ENCODE measurements at regions of chr20 and their contacts with region 1.

Region 1: GRCh38 chr20:50516180-50516934 is 6.2 kb downstream of the PTPN1 start:
- DNase-seq: peak; percentile 87
- ATAC-seq: peak; percentile 59
- H3K4me3 ChIP-seq: peak overlapping the region; percentile 100
- H3K27ac ChIP-seq: peak overlapping the region; percentile 98
- H3K4me1 ChIP-seq: peaks cover 46% of the 10 kb centered on the region
- H3K27me3 ChIP-seq: no peaks in the 10 kb centered on the region
- CTCF ChIP-seq: no peak
- EP300 ChIP-seq: peak; percentile 95 to 98
- POLR2A ChIP-seq: no peak
- RAD21 ChIP-seq: no peak

Region 2: DNA sequence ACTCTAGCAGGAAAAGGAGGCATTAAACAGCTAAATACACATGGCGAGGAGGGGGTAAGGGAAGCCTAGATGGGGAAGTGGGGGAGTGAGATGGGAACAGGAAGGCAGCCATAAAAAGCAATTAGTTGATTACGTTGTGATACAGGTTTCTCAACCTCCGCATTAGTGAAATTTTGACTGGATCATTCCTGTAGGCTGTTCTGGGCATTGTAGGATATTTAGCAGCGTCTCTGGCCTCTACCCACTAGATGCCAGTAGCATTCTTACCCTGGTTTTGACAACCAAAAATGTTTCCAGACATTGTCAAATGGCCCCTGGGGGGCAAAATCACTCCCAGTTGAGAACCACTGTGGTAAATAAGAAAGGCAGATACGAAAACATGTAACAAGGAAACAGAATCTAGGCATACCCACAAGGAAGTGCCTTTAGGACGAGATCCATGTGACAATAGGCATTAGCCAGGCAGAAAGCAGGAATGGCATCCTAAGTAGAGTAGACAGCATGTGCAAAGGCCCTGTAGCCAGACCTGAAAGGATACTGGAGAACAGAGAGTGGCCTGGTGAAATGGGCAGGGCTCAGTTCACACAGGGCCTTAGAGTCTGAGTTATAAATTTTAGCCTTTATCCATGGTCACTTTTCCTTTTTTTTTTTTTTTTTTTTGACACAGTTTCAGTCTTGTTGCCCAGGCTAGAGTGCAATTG is 31.9 kb before region 1 on chr20:
- CTCF ChIA-PET with region 1: interaction called, 13 read pairs
- POLR2A ChIA-PET with region 1: interaction called, 29 read pairs
- RAD21 ChIA-PET with region 1: interaction called, 23 read pairs
- SMC1A ChIA-PET with region 1: interaction called, 2,799 read pairs
- in situ Hi-C with region 1: no loop called
- intact Hi-C with region 1: loop called (anchors 2 kb)
- DNase-seq: no peak
- ATAC-seq: no peak
- H3K4me3 ChIP-seq: no peak overlapping the region
- H3K27ac ChIP-seq: peak overlapping the region; percentile 54
- H3K4me1 ChIP-seq: peaks cover 30% of the 10 kb centered on the region
- H3K27me3 ChIP-seq: no peaks in the 10 kb centered on the region
- CTCF ChIP-seq: no peak
- EP300 ChIP-seq: no peak
- POLR2A ChIP-seq: no peak
- RAD21 ChIP-seq: peak; percentile 36; the same call in 1 of the 2 replicates

Region 3: GRCh38 chr20:50528804-50529351 is 12.5 kb after region 1 on chr20:
- CTCF ChIA-PET with region 1: interaction called, 8 read pairs
- POLR2A ChIA-PET with region 1: interaction called, 56 read pairs
- RAD21 ChIA-PET with region 1: interaction called, 40 read pairs
- SMC1A ChIA-PET with region 1: interaction called, 2,799 read pairs
- in situ Hi-C with region 1: no loop called
- intact Hi-C with region 1: no loop called
- DNase-seq: no peak
- ATAC-seq: peak; percentile 85
- H3K4me3 ChIP-seq: peak overlapping the region; percentile 59
- H3K27ac ChIP-seq: peak overlapping the region; percentile 78
- H3K4me1 ChIP-seq: peaks cover 42% of the 10 kb centered on the region
- H3K27me3 ChIP-seq: no peaks in the 10 kb centered on the region
- CTCF ChIP-seq: no peak
- EP300 ChIP-seq: no peak
- POLR2A ChIP-seq: no peak
- RAD21 ChIP-seq: no peak

Region 4: DNA sequence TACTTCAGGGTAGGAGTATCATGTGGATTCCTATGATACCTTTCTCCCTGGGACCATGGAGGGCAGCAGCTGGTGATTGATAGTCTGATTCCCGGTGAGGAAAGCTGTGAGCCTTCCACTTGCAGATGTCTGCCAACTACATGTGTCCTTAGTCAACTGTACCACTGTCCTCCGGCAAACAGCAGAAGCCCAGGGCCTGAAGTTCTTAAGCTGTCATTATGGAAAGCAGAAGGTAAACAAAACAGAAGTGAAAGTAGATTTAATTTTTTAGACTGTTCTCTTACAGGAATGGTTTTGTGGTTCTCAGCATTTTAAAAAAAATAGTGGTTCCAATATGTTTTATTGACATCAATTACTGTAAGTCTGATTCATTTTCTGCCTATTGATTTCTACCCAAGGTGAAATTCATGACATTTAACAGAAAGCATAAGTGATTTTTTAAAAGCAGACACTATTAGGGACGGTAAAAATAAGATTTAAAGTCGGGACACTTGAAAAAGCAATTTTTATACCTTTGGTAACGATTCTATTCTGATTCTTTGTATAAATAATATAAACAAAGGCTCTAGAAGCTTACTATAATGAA is 30.5 kb after region 1 on chr20:
- CTCF ChIA-PET with region 1: interaction called, 14 read pairs
- POLR2A ChIA-PET with region 1: interaction called, 44 read pairs
- RAD21 ChIA-PET with region 1: interaction called, 167 read pairs
- SMC1A ChIA-PET with region 1: interaction called, 2,799 read pairs
- in situ Hi-C with region 1: no loop called
- intact Hi-C with region 1: no loop called
- DNase-seq: no peak
- ATAC-seq: peak; percentile 77
- H3K4me3 ChIP-seq: peak overlapping the region; percentile 58
- H3K27ac ChIP-seq: peak overlapping the region; percentile 17
- H3K4me1 ChIP-seq: peaks cover 66% of the 10 kb centered on the region
- H3K27me3 ChIP-seq: no peaks in the 10 kb centered on the region
- CTCF ChIP-seq: no peak
- EP300 ChIP-seq: peak in 1 of 2 experiments; percentile 23; a peak in 1 of 4 replicates
- POLR2A ChIP-seq: no peak
- RAD21 ChIP-seq: no peak

Region 5: DNA sequence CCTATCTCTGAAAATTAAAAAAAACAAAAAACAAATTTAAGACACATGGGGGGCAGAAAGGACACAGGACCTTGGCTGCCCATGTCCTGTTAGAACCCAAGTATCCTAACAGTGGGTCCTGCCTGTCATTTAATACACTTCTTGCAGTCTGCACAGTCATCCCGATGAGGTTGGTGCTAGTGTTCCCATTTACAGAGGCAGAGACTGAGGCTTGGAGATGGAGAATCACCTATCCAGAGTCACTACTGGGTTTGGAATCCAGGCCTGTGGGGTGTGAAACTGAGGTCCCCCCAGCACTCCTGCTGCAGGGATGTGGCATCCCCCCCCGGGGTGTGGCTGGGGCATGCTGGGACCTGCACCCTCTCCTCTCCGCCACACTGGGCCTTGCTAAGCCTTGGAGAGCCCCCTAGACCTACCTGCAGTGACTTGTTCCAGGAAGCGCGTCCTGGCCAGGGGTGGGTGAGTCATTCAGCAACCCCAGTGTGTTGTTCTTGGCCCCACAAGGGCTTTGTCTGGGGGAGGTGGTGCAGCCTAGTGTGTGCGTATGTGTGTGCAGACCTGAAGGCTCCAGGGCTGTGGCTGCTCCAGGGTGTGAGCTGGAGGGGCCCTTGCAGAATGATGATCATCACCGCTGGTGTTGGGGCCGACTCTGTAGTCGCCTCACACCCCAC is 328.2 kb after region 1 on chr20:
- CTCF ChIA-PET with region 1: no interaction called
- POLR2A ChIA-PET with region 1: no interaction called
- RAD21 ChIA-PET with region 1: no interaction called
- SMC1A ChIA-PET with region 1: no interaction called
- in situ Hi-C with region 1: no loop called
- intact Hi-C with region 1: no loop called
- DNase-seq: peak; percentile 83
- ATAC-seq: peak; percentile 96
- H3K4me3 ChIP-seq: no peak overlapping the region; the same call in 1 of the 2 replicates
- H3K27ac ChIP-seq: peak overlapping the region; percentile 96
- H3K4me1 ChIP-seq: peaks cover 50% of the 10 kb centered on the region
- H3K27me3 ChIP-seq: no peaks in the 10 kb centered on the region
- CTCF ChIP-seq: peak in 1 of 3 experiments; percentile 6; a peak in 1 of 6 replicates
- EP300 ChIP-seq: peak; percentile 76 to 83; a peak in 3 of 4 replicates
- POLR2A ChIP-seq: peak; percentile 73
- RAD21 ChIP-seq: peak; percentile 33